Activated CD4-positive, alpha-beta memory T cell treated with anti-CD3 and anti-CD28 coated beads for 36 hours (primary cell): ENCODE measurements at regions of chr12 and their contacts with region 1.

Region 1: DNA sequence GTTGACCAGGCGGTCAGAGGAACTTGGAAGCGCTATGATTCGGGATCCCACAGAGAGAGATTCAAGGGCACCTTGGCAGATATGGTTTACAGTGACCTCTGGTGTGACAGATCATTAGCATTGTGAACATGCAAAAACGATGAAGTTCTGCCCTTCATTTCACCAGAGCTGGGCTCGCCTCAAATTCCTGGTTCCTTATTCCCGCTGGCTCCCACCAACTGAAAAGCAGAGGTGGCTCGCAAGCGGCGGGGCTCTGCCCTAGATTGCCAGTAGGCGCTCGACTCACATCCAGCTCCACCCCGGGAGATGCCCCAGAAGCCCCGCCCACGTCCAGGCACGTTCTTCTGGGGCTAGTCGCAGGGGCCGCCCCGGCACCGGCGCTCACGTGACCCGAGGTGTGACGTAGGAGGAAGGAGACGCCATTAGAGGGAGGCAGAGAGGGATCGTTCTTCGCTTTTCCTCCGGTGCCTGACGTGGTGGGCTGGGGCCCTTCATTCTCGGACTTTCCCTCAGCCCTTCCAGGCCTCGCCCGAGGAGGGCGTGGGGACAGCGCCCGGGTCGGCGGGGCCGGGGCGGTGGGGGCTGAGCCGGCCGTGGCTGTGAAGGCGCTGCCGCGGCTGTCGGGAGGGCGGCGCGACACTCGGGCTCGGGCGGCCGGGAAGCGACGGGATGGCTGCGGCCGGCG is at the start of gene RAB21:
- DNase-seq: peak; percentile 99
- H3K4me3 Mint-ChIP-seq: peak within 1 kb of the TSS; percentile 95
- H3K27ac Mint-ChIP-seq: peak within 1 kb of the TSS; percentile 98
- H3K4me1 Mint-ChIP-seq: peaks cover 35% of the 10 kb centered on the region
- H3K27me3 Mint-ChIP-seq: peaks cover 1% of the 10 kb centered on the region
- total RNA-seq, gene RAB21: 72.7 to 76.8 TPM

Region 2: DNA sequence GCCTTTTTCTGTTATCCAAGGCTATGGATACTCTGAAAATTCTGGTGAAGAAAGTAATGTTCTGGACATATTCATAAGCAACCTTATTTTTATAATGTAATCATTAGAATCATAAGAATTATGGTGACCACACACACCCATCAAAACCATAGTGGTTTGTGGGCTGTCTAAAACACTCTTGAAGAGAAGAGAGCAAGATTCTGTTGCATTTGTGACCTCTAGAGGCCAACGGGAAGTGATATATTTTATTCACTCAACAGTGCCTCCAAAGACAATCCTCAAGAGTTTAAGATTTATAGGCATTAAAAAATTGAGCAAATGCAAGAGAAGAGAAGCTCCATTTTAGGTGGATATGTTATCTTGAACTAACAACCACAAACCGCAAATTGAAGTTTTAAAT is 383.5 kb before region 1 on chr12:
- CTCF ChIA-PET with region 1: no interaction called
- POLR2A ChIA-PET with region 1: no interaction called
- intact Hi-C with region 1: no loop called
- DNase-seq: no peak
- H3K4me3 Mint-ChIP-seq: no peak overlapping the region
- H3K27ac Mint-ChIP-seq: no peak overlapping the region
- H3K4me1 Mint-ChIP-seq: no peaks in the 10 kb centered on the region
- H3K27me3 Mint-ChIP-seq: no peaks in the 10 kb centered on the region

Region 3: GRCh38 chr12:71685914-71686665 is 68.5 kb before region 1 on chr12 and contains the start of gene TMEM19:
- CTCF ChIA-PET with region 1: interaction called, 32 read pairs
- POLR2A ChIA-PET with region 1: interaction called, 3 read pairs
- intact Hi-C with region 1: loop called (anchors 1 kb)
- DNase-seq: peak; percentile 87
- H3K4me3 Mint-ChIP-seq: peak within 1 kb of the TSS; percentile 96
- H3K27ac Mint-ChIP-seq: peak within 1 kb of the TSS; percentile 92
- H3K4me1 Mint-ChIP-seq: peaks cover 16% of the 10 kb centered on the region
- H3K27me3 Mint-ChIP-seq: no peaks in the 10 kb centered on the region
- total RNA-seq, gene TMEM19: 10.8 to 11.7 TPM

Region 4: GRCh38 chr12:71731751-71732712 is 22.6 kb before region 1 on chr12:
- CTCF ChIA-PET with region 1: no interaction called
- POLR2A ChIA-PET with region 1: no interaction called
- intact Hi-C with region 1: no loop called
- DNase-seq: no peak
- H3K4me3 Mint-ChIP-seq: no peak overlapping the region
- H3K27ac Mint-ChIP-seq: no peak overlapping the region
- H3K4me1 Mint-ChIP-seq: no peaks in the 10 kb centered on the region
- H3K27me3 Mint-ChIP-seq: no peaks in the 10 kb centered on the region

Region 5: GRCh38 chr12:71780237-71780822 is 25.7 kb after region 1 on chr12:
- CTCF ChIA-PET with region 1: interaction called, 16 read pairs
- POLR2A ChIA-PET with region 1: no interaction called
- intact Hi-C with region 1: no loop called
- DNase-seq: peak; percentile 46
- H3K4me3 Mint-ChIP-seq: no peak overlapping the region
- H3K27ac Mint-ChIP-seq: peak overlapping the region; percentile 4
- H3K4me1 Mint-ChIP-seq: peaks cover 5% of the 10 kb centered on the region
- H3K27me3 Mint-ChIP-seq: no peaks in the 10 kb centered on the region

Region 6: DNA sequence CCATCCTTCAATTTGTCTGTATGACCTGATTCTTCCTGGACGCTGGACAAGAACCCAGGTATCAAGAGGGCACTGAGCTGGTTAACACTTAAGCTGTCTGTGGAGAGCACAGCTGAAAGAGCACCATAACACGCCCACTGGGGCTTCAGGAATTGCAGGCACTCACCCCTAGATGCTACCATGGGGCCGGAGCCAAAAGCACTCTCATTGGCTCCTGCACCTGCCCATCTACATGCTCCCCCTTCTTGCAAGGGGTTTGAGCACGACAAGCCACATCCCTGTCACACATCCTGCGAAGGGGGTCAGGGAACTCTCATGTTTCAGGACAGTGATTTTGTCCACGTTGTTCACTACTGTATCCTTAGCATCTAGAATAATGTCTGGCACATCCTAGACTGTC is 49.9 kb after region 1 on chr12:
- CTCF ChIA-PET with region 1: no interaction called
- POLR2A ChIA-PET with region 1: no interaction called
- intact Hi-C with region 1: loop called (anchors 5 kb)
- DNase-seq: no peak
- H3K4me3 Mint-ChIP-seq: no peak overlapping the region
- H3K27ac Mint-ChIP-seq: no peak overlapping the region
- H3K4me1 Mint-ChIP-seq: no peaks in the 10 kb centered on the region
- H3K27me3 Mint-ChIP-seq: peaks cover 12% of the 10 kb centered on the region